ENCODE measurements at regions of chr17 and their contacts with region 1.

Region 1: DNA sequence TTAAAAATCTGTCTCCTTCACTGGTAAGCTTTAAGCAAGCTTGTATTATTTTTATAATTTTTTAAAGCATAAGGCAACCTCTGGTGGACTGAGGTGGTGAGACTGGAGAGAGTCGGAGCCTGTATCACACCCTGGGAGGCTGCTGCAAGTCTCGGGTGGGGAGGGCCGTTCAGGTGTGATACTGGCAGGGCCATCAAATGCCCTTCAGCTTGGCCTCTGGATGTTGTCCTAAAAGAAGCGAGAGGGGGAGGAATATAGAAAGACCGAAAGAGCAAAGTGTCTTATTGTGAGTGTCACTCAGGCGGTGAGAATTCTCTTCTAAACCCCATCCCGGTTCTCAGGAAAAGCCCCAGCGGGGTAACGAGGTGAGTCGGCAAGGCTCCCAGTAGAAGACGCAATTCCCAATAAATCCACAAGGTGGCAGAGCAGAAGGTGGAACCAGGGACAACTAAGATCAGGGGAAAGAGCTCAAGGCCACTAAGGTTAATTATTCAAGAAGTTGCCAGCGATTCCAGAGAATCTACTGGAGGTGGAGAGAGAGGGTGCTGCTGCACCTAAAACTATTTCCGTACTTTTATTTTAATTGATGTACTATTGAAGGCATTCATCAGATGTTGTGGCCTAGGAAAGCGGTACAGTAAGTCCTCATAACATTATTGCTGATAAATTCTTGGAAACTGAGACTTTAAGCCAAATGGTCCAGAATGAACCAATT is 14.1 kb downstream of the C17orf67 start:
- DNase-seq: peak in 1 of 2 donors; percentile 76
- ATAC-seq: peak; percentile 57 to 85 (median 74)
- H3K4me3 ChIP-seq: no peak overlapping the region
- H3K27ac ChIP-seq: no peak overlapping the region
- H3K4me1 ChIP-seq: peaks cover 0 to 27% (median 7%) of the 10 kb centered on the region in 9 donors
- H3K27me3 ChIP-seq: no peaks in the 10 kb centered on the region
- CTCF ChIP-seq: peak; percentile 77 to 94 (median 91)

Region 2: GRCh38 chr17:56860551-56860950 is 41.0 kb after region 1 on chr17:
- intact Hi-C with region 1: loop called in 1 of 10 experiments (anchors 2 kb)
- DNase-seq: no peak
- ATAC-seq: no peak
- H3K4me3 ChIP-seq: no peak overlapping the region
- H3K27ac ChIP-seq: no peak overlapping the region
- H3K4me1 ChIP-seq: no peaks in the 10 kb centered on the region
- H3K27me3 ChIP-seq: no peaks in the 10 kb centered on the region
- CTCF ChIP-seq: no peak

Region 3: GRCh38 chr17:56913864-56914640 is 94.5 kb after region 1 on chr17 and contains the start of gene TRIM25:
- intact Hi-C with region 1: loop called in 1 of 10 experiments (anchors 5 kb)
- DNase-seq: peak; percentile 91 to 93
- ATAC-seq: peak; percentile 93 to 97 (median 96)
- H3K4me3 ChIP-seq: peak within 1 kb of the TSS; percentile 66 to 99 (median 90)
- H3K27ac ChIP-seq: peak within 1 kb of the TSS; percentile 71 to 96 (median 91)
- H3K4me1 ChIP-seq: peaks cover 5 to 74% (median 42%) of the 10 kb centered on the region in 9 donors
- H3K27me3 ChIP-seq: no peaks in the 10 kb centered on the region
- CTCF ChIP-seq: no peak
- total RNA-seq, gene TRIM25: 8.7 to 32.7 (median 17.3) TPM

Region 4: GRCh38 chr17:56939901-56940343 is 120.3 kb after region 1 on chr17:
- intact Hi-C with region 1: loop called (anchors 1 to 5 kb)
- DNase-seq: no peak
- ATAC-seq: peak; percentile 37 to 71 (median 56)
- H3K4me3 ChIP-seq: no peak overlapping the region
- H3K27ac ChIP-seq: no peak overlapping the region
- H3K4me1 ChIP-seq: peaks cover 0 to 18% (median 4%) of the 10 kb centered on the region in 9 donors
- H3K27me3 ChIP-seq: no peaks in the 10 kb centered on the region
- CTCF ChIP-seq: peak; percentile 46 to 84 (median 71)